HCT116 (cell line): ENCODE measurements at regions of chr1 and their contacts with region 1.

Region 1: DNA sequence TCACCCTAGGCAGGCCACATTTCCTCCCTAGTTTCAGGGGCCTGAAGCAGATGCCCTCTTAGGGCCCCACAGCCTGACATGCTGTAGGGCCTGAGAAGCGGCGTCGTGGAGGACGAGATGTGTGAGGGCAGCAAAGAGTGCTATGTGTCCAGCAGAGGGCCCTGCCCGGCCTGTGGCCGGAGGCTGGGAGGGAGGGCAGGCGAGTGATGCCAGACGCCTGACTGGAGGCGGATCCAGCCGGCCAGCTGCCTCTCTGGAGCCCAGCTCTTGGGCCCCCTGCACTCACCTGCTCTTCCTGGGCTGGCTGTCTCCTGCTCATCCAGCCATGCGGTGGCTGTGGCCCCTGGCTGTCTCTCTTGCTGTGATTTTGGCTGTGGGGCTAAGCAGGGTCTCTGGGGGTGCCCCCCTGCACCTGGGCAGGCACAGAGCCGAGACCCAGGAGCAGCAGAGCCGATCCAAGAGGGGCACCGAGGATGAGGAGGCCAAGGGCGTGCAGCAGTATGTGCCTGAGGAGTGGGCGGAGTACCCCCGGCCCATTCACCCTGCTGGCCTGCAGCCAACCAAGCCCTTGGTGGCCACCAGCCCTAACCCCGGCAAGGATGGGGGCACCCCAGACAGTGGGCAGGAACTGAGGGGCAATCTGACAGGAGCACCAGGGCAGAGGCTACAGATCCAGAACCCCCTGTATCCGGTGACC is at the start of gene GPR37L1:
- DNase-seq: no peak
- ATAC-seq: peak; percentile 70
- H3K4me3 ChIP-seq: no peak within 1 kb of the TSS
- H3K27ac ChIP-seq: no peak within 1 kb of the TSS
- H3K4me1 ChIP-seq: peaks cover 10 to 20% of the 10 kb centered on the region in 2 experiments
- H3K27me3 ChIP-seq: no peaks in the 10 kb centered on the region; the same call in 1 of the 2 replicates
- CTCF ChIP-seq: peak; percentile 52 to 67 (median 66); a peak in 5 of 6 replicates
- POLR2A ChIP-seq: no peak
- RAD21 ChIP-seq: no peak; the same call in 1 of the 2 replicates
- total RNA-seq, gene GPR37L1: 0.10 TPM

Region 2: DNA sequence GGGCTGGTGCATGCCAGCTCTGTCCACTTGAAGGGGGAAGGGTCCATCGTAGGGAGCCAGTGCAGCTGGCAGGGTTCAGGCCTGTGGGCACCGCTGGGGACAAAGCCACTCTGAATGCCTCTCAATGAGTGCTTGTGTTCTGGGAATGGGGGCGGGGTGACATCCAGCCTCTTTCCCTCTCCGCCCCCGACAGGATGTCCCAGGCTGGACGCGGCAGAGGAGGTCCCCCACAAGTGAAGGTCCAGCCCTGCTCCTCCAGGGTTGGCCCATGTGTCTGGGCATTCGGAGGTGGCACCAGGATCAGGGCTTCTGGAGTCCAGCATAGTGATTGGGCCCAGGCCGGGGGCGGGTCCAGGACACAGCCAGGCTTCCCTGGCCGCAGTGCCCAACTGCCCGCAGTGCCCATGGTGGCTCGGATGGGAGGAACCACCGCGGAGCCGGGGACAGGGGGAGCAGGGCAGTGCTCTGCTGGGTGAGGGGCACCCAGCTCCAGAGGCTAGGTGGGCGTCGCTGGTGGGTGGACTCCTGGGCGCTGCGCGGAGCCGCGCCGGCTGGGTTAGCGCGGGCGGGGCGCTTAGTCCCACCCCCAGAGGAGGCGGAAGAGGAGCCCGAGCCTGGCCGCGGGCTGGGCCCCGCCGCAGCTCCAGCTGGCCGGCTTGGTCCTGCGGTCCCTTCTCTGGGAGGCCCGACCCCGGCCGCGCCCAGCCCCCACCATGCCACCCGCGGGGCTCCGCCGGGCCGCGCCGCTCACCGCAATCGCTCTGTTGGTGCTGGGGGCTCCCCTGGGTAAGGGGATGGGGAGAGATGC is 234.3 kb before region 1 on chr1 and contains the start of gene SHISA4:
- CTCF ChIA-PET with region 1: no interaction called
- POLR2A ChIA-PET with region 1: no interaction called
- RAD21 ChIA-PET with region 1: no interaction called
- intact Hi-C with region 1: loop called (anchors 5 kb)
- DNase-seq: peak; percentile 51
- ATAC-seq: peak; percentile 87
- H3K4me3 ChIP-seq: peak within 1 kb of the TSS; percentile 63 to 71
- H3K27ac ChIP-seq: peak within 1 kb of the TSS; percentile 47; the same call in 1 of the 2 replicates
- H3K4me1 ChIP-seq: peaks cover 36 to 47% of the 10 kb centered on the region in 2 experiments
- H3K27me3 ChIP-seq: no peaks in the 10 kb centered on the region
- CTCF ChIP-seq: no peak
- POLR2A ChIP-seq: peak; percentile 47
- RAD21 ChIP-seq: no peak
- total RNA-seq, gene SHISA4: 15.2 TPM

Region 3: GRCh38 chr1:202135221-202135721 is 12.5 kb after region 1 on chr1:
- CTCF ChIA-PET with region 1: interaction called, 13 read pairs
- POLR2A ChIA-PET with region 1: no interaction called
- RAD21 ChIA-PET with region 1: no interaction called
- intact Hi-C with region 1: no loop called
- DNase-seq: peak; percentile 24
- ATAC-seq: peak; percentile 92
- H3K4me3 ChIP-seq: no peak overlapping the region
- H3K27ac ChIP-seq: 0 out of 2 replicates have a peak overlapping the region, but pooled peaks have one; percentile 17
- H3K4me1 ChIP-seq: no peaks in the 10 kb centered on the region
- H3K27me3 ChIP-seq: no peaks in the 10 kb centered on the region
- CTCF ChIP-seq: peak; percentile 68 to 89 (median 87); a peak in 5 of 6 replicates
- POLR2A ChIP-seq: no peak
- RAD21 ChIP-seq: peak; percentile 78